ENCODE measurements at regions of chr1 and their contacts with region 1.

Region 1: GRCh38 chr1:115138968-115139367 is 49.7 kb upstream of the TSPAN2 start:
- DNase-seq: peak; percentile 87
- H3K4me3 ChIP-seq: no peak overlapping the region
- CTCF ChIP-seq: peak; percentile 88

Region 2: DNA sequence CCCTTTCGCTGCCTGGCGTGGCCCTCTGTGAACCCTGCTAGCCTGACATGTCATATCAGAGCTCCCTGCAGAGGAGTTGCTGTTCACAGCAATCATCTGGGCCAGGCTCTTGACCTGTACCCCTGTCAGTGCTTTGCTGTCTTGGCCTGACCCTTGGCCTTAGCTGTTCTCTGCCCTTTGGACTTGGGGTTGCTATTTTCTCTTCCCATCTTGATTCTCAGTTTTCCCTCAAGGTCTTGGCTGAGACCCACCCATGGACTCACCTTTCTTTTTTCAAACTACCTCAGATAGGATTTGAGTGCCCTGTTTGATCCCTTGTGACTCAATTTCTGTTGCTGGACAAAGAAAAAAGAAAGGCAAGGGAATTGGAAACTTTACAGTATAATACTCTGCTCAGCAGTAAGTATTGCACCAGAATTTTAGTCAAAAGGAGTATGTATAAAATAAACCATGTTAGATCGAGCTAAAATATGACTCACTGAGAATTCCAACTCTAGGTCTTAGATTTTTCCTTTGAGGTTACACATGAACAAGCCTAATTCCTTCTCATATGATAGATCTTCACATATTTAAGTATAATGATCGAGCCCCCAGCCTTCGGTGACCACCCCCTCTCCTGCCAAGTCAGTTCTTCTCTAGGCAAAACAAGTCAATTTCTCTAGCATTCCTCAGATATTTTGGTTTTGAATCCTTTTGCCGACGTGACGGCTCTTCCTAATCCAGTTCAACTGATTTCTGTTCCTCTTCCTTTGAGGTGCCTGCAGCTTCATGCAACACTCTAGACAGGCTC is 88.6 kb after region 1 on chr1:
- CTCF ChIA-PET with region 1: interaction called, 18 read pairs
- POLR2A ChIA-PET with region 1: interaction called, 4 read pairs
- DNase-seq: peak; percentile 84
- H3K4me3 ChIP-seq: no peak overlapping the region; the same call in 1 of the 2 replicates
- CTCF ChIP-seq: no peak

Region 3: GRCh38 chr1:115261496-115261895 is 122.5 kb after region 1 on chr1:
- CTCF ChIA-PET with region 1: interaction called, 16 read pairs
- POLR2A ChIA-PET with region 1: no interaction called
- DNase-seq: no peak
- H3K4me3 ChIP-seq: no peak overlapping the region
- CTCF ChIP-seq: no peak

Region 4: DNA sequence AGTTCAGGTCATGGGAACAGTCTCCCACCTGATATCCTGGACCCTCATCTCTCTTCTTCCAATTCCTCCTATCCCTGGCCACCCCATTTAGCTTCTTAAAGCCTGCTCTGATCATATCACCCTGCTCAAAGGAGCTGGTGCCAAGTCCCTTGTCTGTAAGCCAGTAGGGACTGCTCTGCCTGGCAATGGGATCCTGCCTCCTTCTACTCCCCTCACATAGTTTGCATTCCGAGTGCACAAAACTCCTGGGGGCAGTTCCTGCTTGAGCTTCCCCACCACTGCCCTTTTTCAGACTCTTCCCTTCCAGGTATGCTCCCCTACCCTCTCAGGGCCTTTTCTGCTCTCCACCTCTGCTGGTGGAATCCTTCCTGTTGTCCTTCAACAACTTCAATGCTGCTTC is 151.0 kb after region 1 on chr1:
- CTCF ChIA-PET with region 1: interaction called, 29 read pairs
- POLR2A ChIA-PET with region 1: no interaction called
- DNase-seq: no peak
- H3K4me3 ChIP-seq: no peak overlapping the region
- CTCF ChIP-seq: no peak

Region 5: DNA sequence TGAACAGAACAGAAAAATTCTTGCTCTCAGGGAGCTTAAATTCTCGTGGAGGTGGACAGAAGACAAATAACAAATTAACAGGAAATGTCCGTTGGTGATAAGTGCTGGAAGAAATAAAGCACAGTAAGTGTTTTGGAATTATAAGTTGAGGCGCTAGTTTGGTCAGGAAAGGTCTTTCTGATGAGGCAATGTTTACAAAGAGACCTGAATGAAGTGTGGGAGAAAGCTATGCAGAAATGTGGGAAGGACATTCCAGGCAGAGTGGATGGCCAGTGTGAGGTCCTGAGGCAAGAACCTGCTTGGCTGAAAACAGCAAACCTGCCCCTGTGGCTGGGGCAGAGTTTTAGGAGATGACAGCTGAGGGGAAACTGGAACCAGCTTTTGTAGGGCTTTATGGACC is 175.8 kb after region 1 on chr1:
- CTCF ChIA-PET with region 1: interaction called, 12 read pairs
- POLR2A ChIA-PET with region 1: no interaction called
- DNase-seq: no peak
- H3K4me3 ChIP-seq: no peak overlapping the region
- CTCF ChIP-seq: no peak

Region 6: DNA sequence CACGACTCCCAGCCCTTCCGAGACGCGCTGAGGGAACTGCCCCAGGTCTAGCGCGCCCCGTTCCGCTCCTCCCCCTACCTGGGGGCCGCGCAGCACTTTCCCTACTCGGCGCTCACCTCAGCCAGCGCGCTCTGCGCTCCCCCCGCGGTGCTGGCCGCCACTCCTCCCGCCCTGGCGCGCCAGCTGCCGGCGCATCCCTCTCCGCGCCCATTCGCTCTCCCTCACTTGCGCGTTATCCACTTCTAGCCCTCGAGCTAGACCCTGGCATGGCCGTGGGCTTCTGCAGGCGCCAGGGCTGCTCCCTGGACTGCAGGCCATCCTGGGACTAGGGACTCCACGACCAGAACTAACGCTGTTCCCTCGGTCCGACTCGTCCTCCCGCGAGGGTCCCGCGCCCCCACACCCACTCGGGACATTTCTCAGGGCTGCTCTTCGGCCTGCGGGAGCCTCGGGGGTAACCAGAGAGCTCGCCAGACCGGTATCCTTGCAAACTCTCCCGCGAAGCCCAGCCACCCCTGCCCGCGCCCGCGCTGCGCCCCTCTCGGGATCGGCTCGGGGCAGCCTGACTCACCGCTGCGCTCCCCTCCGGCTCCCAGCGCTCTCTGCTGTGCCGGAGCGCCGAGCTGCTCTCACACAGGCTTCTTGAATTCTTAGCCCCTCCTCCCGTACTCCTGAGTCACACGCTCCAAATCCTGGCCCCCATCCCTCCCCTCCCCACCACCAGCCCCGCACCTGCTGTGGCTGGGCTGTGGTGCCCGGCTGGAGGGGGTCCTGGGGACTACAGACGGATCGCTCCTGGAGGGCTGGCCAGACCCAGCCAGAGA is 198.9 kb after region 1 on chr1 and contains the start of gene NGF:
- CTCF ChIA-PET with region 1: interaction called, 11 read pairs
- POLR2A ChIA-PET with region 1: interaction called, 5 read pairs
- DNase-seq: no peak
- H3K4me3 ChIP-seq: peak within 1 kb of the TSS; percentile 99
- CTCF ChIP-seq: no peak

Region 7: DNA sequence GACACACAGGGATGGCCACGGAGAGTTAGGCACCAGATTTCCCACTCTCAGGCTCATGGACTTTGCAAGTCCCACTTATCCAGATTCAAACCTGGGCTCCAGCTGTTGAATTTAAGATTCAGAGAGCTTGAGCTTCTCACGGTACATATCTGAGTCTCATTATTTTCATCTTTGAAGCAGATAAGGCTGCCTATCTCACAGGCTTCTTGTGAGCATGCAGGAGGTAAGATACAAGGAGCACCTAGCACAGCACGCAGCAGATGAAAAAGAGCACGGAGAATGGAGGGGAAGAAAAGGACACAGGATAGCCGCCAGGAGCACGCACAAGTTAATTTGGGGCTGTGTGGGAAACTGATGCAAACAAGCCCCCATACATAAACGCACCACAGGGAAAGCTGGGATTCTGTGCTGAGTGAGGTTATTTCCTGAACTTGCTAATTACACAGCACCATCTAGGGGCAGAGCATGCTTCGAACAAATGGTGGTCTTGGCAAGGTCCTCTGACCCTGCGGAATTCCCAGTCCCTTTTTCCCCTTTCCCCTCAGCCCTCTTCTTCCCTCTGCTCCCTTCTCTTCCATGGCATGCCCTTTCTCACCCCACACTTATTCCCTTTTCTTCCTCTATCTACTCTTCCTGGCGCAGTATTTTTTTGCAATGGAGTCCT is 368.1 kb after region 1 on chr1:
- CTCF ChIA-PET with region 1: interaction called, 37 read pairs
- POLR2A ChIA-PET with region 1: no interaction called
- DNase-seq: no peak
- H3K4me3 ChIP-seq: peak overlapping the region; percentile 16
- CTCF ChIP-seq: peak; percentile 70

Region 8: DNA sequence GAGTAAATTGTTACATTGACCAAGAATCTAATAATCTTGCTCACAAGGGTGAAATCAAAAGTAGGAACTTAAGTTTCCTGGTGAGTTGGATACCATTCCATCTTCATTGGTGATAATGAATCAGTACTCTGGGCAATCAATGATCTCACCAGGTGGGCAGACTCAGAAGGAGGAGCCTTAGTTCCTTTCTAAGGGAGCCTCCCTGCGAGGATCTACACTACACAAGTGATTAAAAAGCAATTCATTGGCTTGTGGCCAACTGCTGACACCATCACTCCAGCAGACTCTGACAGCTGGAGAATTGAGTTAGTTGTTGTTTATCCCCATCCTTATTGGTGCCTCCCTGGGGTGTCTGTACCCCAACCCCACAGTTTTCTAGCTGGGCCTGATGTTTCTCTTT is 418.7 kb after region 1 on chr1:
- CTCF ChIA-PET with region 1: no interaction called
- POLR2A ChIA-PET with region 1: no interaction called
- DNase-seq: no peak
- H3K4me3 ChIP-seq: no peak overlapping the region
- CTCF ChIP-seq: no peak

Measured in AG04449 (cell line).